HEK293 (cell line): ENCODE measurements at regions of chr16 and their contacts with region 1.

Region 1: GRCh38 chr16:86343027-86343787 is 167.1 kb upstream of the FOXF1 start:
- H3K4me3 ChIP-seq: no peak overlapping the region
- H3K27ac ChIP-seq: no peak overlapping the region
- H3K4me1 ChIP-seq: peaks cover 6% of the 10 kb centered on the region
- CTCF ChIP-seq: no peak

Region 2: GRCh38 chr16:86354645-86355044 is 11.4 kb after region 1 on chr16:
- CTCF ChIA-PET with region 1: interaction called, 10 read pairs
- POLR2A ChIA-PET with region 1: no interaction called
- H3K4me3 ChIP-seq: no peak overlapping the region
- H3K27ac ChIP-seq: no peak overlapping the region
- H3K4me1 ChIP-seq: no peaks in the 10 kb centered on the region
- CTCF ChIP-seq: no peak

Region 3: DNA sequence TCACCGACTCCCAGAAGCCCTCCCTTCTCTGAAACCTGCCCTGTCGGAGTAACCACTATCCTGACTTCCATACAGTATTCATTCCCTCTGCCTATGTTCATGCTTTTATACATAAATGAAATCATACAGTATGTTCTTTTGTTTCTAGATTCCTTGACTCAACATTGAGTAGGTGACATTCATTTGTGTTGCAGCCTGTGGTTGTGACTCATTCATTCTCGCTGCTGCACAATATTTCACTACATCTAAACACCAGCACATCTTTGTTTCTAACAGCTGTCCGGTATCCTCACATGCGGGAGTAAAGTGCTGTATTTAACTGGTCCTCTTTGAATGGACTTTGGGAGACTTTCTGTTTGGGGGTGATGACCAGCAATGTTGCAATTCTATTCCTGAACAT is 32.2 kb after region 1 on chr16:
- CTCF ChIA-PET with region 1: no interaction called
- POLR2A ChIA-PET with region 1: no interaction called
- H3K4me3 ChIP-seq: no peak overlapping the region
- H3K27ac ChIP-seq: no peak overlapping the region
- H3K4me1 ChIP-seq: no peaks in the 10 kb centered on the region
- CTCF ChIP-seq: no peak

Region 4: GRCh38 chr16:86929057-86929871 is 586.1 kb after region 1 on chr16:
- CTCF ChIA-PET with region 1: no interaction called
- POLR2A ChIA-PET with region 1: interaction called, 11 read pairs
- H3K4me3 ChIP-seq: no peak overlapping the region; the same call in 1 of the 2 replicates
- H3K27ac ChIP-seq: peak overlapping the region; percentile 54
- H3K4me1 ChIP-seq: peaks cover 16% of the 10 kb centered on the region
- CTCF ChIP-seq: no peak